Activated CD4-positive, alpha-beta T cell treated with anti-CD3 and anti-CD28 coated beads, Interleukin-2, amount 10 ng/mL, durations not matched to agents 7 days and 5 days (primary cell): ENCODE measurements at regions of chr3 and their contacts with region 1.

Region 1: GRCh38 chr3:50611464-50612233 is at the start of gene CISH:
- DNase-seq: peak; percentile 98
- H3K4me3 Mint-ChIP-seq: peak within 1 kb of the TSS; percentile 99
- H3K27ac Mint-ChIP-seq: peak within 1 kb of the TSS; percentile 98
- H3K4me1 Mint-ChIP-seq: peaks cover 33% of the 10 kb centered on the region
- H3K27me3 Mint-ChIP-seq: no peaks in the 10 kb centered on the region
- total RNA-seq, gene CISH: 300 to 308 TPM

Region 2: GRCh38 chr3:50088725-50089608 is 522.7 kb before region 1 on chr3 and contains the start of gene RBM5:
- CTCF ChIA-PET with region 1: no interaction called
- POLR2A ChIA-PET with region 1: no interaction called
- DNase-seq: peak; percentile 96
- H3K4me3 Mint-ChIP-seq: peak within 1 kb of the TSS; percentile 98
- H3K27ac Mint-ChIP-seq: peak within 1 kb of the TSS; percentile 99
- H3K4me1 Mint-ChIP-seq: peaks cover 27% of the 10 kb centered on the region
- H3K27me3 Mint-ChIP-seq: no peaks in the 10 kb centered on the region
- total RNA-seq, gene RBM5: 212 to 215 TPM

Region 3: GRCh38 chr3:50580683-50581458 is 30.8 kb before region 1 on chr3:
- CTCF ChIA-PET with region 1: interaction called, 274 read pairs
- POLR2A ChIA-PET with region 1: no interaction called
- DNase-seq: no peak
- H3K4me3 Mint-ChIP-seq: no peak overlapping the region
- H3K27ac Mint-ChIP-seq: peak overlapping the region; percentile 88
- H3K4me1 Mint-ChIP-seq: peaks cover 84% of the 10 kb centered on the region
- H3K27me3 Mint-ChIP-seq: no peaks in the 10 kb centered on the region

Region 4: DNA sequence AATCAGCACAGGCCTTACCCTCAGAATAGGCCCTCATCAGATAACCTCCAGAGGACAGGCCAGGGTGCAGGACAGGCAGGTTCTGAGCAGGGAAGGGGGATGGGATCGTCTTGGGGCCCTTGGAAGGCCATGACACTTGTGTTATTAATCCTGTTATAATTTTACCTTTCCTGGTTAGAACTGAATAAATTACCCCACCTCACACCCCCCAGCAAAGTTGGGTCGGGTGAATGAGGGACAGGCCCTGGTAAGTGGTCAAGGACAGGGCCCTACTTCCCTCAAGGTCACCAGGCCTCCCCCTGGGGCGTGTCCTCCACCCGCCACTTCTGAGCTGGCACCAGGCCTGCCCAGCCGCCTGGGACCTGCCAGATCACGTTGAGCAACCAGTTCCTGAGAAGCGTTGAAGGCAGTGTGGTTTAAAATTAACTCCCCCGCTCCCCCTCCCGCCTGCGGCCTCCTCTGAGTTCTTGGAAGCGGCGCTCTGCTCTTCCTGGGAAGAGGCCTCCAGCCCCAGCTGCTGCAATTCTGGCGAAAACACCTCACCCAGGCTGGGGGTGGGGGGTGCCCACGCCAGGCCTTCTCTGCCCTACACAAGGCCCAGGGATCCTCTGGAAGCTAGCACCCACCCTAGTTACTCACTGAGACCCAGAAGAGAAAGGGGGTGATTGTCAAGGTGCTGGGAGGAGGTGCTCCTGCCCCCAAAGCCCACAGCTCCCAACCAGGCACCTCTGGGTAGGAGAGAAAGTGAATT is 10.6 kb before region 1 on chr3:
- CTCF ChIA-PET with region 1: interaction called, 59 read pairs
- POLR2A ChIA-PET with region 1: interaction called, 56 read pairs
- DNase-seq: peak; percentile 84
- H3K4me3 Mint-ChIP-seq: peak overlapping the region; percentile 99
- H3K27ac Mint-ChIP-seq: peak overlapping the region; percentile 98
- H3K4me1 Mint-ChIP-seq: peaks cover 85% of the 10 kb centered on the region
- H3K27me3 Mint-ChIP-seq: no peaks in the 10 kb centered on the region

Region 5: DNA sequence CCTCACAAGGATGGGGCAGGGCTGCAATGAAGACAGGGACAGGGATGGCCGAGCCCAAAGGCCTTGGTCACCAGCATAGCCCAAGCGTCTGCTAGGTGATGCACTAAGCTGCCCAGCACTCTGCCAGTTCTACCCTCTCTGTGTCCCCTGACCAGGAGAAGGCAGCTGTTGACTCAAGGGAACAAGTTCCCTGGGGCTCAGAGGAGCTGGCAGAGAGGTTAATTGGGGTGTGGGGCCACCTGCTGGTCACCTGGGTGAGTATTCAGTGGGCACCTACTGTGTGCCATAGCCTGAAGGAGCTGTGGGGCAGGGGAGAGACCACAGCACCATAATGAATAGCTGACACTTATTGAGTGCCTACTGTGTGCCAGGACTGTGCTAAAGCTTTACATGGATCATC is 41.1 kb after region 1 on chr3:
- CTCF ChIA-PET with region 1: interaction called, 34 read pairs
- POLR2A ChIA-PET with region 1: interaction called, 3 read pairs
- DNase-seq: peak; percentile 60
- H3K4me3 Mint-ChIP-seq: no peak overlapping the region
- H3K27ac Mint-ChIP-seq: no peak overlapping the region
- H3K4me1 Mint-ChIP-seq: peaks cover 26% of the 10 kb centered on the region
- H3K27me3 Mint-ChIP-seq: no peaks in the 10 kb centered on the region

Region 6: GRCh38 chr3:51379301-51379700 is 767.7 kb after region 1 on chr3:
- CTCF ChIA-PET with region 1: interaction called, 13 read pairs
- POLR2A ChIA-PET with region 1: no interaction called
- DNase-seq: no peak
- H3K4me3 Mint-ChIP-seq: no peak overlapping the region
- H3K27ac Mint-ChIP-seq: no peak overlapping the region
- H3K4me1 Mint-ChIP-seq: peaks cover 22% of the 10 kb centered on the region
- H3K27me3 Mint-ChIP-seq: no peaks in the 10 kb centered on the region